Activated T-helper 1 cell treated with anti-CD3 and anti-CD28 coated beads, Interleukin-12 subunit alpha, Interleukin-12 subunit beta, Interleukin-2, Interleukin-4 antibody, amounts not matched to agents 30 ng/mL and 10 ng/mL and 1 ng/mL, durations not matched to agents 14 hours and 24 hours and 36 hours (primary cell): ENCODE measurements at regions of chr1 and their contacts with region 1.

Region 1: DNA sequence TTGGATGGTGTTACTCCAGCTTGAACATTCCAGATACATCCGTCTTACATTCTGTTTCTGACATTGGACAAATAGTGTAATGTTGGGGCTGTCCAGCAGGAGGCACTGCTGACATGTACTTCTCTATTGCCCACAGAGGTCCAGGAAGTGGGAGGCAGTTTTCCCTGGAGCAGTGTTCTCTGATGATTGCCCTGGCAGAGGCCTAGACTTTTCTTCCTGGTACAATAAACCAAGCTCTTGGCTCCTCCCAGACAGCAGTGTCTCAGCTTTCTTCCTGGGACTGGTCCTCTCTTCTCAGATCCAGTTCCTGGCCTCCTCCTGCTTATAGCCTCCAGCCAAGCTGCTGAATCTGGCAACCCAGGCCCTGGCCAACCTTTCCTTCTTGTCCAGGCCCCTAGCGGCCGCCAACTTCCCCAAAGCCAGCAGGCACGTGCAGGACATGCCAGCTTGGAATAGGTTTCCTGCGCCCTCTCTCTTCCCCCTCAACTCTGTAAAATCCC is 14.9 kb upstream of the IFNLR1 start:
- DNase-seq: peak; percentile 34
- H3K4me3 Mint-ChIP-seq: no peak overlapping the region
- H3K27ac Mint-ChIP-seq: no peak overlapping the region
- H3K4me1 Mint-ChIP-seq: peaks cover 22% of the 10 kb centered on the region
- H3K27me3 Mint-ChIP-seq: peaks cover 12% of the 10 kb centered on the region

Region 2: GRCh38 chr1:24186993-24187805 is 14.8 kb before region 1 on chr1 and contains the start of gene IFNLR1:
- intact Hi-C with region 1: loop called (anchors 2 kb)
- DNase-seq: peak; percentile 61
- H3K4me3 Mint-ChIP-seq: peak within 1 kb of the TSS; percentile 76
- H3K27ac Mint-ChIP-seq: peak within 1 kb of the TSS; percentile 23
- H3K4me1 Mint-ChIP-seq: peaks cover 40% of the 10 kb centered on the region
- H3K27me3 Mint-ChIP-seq: peaks cover 7% of the 10 kb centered on the region
- total RNA-seq, gene IFNLR1: 2.2 and 3.1 TPM in 2 replicates

Region 3: DNA sequence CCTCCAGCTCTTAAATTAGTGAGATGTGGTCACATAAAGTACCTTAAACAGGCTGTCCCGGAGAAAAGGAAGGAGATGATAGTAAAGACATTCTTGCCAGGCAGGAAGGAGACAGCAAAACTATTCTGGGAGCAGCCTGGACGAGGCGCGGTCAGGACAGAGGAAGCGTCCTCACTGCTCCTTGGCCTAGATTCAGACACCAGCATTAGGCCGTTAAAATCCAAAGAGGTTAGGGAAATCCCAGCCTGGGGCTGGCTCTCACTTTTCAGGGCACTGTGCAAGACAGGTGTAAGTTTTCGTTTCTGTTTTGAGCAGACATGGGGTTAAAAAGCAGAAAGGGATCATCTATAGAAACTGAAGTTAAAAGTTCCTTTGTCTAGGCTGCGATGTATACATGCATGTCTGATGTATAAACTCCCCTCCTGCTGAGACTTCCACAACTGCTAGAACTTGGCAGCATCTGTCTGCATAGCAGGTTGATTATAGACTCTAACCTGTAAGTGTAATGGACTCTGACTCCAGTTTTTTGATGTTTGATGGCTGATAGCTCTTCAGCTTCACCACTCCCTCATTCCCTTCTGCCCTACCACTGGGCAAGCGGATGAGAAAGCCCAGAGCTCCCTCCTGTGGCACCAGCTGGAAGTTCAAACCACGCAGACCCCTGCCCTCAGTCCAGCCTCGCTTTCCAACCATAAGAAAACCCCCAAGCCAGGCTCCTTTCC is 190.1 kb after region 1 on chr1:
- intact Hi-C with region 1: loop called (anchors 1 kb)
- DNase-seq: peak; percentile 47
- H3K4me3 Mint-ChIP-seq: peak overlapping the region; percentile 80
- H3K27ac Mint-ChIP-seq: peak overlapping the region; percentile 79
- H3K4me1 Mint-ChIP-seq: peaks cover 30% of the 10 kb centered on the region
- H3K27me3 Mint-ChIP-seq: peaks cover 4% of the 10 kb centered on the region

Region 4: GRCh38 chr1:24586970-24587820 is 385.2 kb after region 1 on chr1:
- intact Hi-C with region 1: loop called (anchors 1 kb)
- DNase-seq: peak; percentile 53
- H3K4me3 Mint-ChIP-seq: no peak overlapping the region
- H3K27ac Mint-ChIP-seq: no peak overlapping the region
- H3K4me1 Mint-ChIP-seq: peaks cover 9% of the 10 kb centered on the region
- H3K27me3 Mint-ChIP-seq: peaks cover 17% of the 10 kb centered on the region

Region 5: DNA sequence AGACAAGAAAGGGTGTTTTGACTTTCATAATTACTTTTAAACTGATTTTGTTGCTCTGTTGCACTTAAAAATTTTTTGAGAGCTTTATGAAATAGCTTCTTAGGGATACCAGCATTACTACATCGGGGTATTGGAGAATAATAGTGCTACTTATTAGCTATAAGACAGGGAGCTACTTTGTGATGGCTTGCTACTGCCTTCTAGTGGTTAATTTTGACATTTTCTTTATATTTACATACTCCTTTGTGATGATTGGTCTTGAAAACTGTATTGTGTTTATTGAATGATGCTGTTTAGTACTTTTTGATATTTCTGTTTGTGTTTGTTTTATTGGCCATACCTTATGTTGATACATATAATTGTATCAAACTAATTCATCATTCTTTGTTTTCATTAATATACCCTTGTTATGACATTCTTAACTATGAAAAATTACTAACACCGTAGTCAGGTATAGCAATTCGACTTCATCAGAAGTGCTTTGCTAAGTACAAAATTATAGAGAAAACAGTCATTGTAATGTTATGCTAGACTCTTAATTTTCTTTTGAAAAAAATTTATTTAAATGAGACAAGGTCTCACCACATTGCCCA is 628.8 kb after region 1 on chr1:
- intact Hi-C with region 1: loop called (anchors 10 kb)
- DNase-seq: no peak
- H3K4me3 Mint-ChIP-seq: no peak overlapping the region
- H3K27ac Mint-ChIP-seq: no peak overlapping the region
- H3K4me1 Mint-ChIP-seq: no peaks in the 10 kb centered on the region
- H3K27me3 Mint-ChIP-seq: peaks cover 3% of the 10 kb centered on the region